Breast epithelium (tissue), 4 donors: ENCODE measurements at regions of chr2 and their contacts with region 1.

Region 1: GRCh38 chr2:31404827-31405226 is 9.7 kb downstream of the XDH start:
- DNase-seq: no peak
- H3K4me3 ChIP-seq: no peak overlapping the region
- H3K27ac ChIP-seq: no peak overlapping the region
- H3K4me1 ChIP-seq: no peaks in the 10 kb centered on the region
- H3K27me3 ChIP-seq: no peaks in the 10 kb centered on the region
- CTCF ChIP-seq: no peak
- POLR2A ChIP-seq: no peak

Region 2: DNA sequence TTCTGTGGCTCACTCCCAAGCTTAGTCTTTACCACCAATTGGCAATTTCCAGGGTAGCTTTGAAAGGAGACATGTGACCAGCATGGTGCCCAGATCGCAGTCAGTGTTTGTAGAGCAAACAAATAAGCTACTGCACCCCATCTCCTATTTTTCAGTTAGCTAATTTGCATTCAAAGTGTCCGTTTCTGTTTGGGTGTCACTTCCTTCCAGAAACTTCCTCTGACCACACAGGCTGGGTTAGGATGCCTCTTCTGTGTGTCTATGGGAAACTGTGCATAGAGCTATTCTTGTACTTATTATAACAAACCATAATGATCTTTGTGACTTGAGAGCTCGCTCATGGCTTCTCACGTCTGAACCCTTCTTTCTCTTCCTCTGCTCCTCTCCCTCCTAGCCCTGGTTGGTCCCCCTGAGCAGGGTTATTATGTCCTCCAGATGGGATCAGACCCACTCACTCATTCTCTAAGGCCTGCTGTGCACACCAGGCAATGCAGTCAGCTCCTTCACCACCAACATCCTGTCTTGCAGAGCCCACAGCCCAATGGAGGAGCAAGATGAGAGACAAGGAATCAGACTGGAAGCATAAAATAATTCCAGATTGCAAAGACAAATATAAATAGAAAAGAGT is 1382.3 kb before region 1 on chr2:
- intact Hi-C with region 1: loop called (anchors 5 kb)
- DNase-seq: no peak
- H3K4me3 ChIP-seq: no peak overlapping the region
- H3K27ac ChIP-seq: no peak overlapping the region
- H3K4me1 ChIP-seq: peaks cover 0 to 6% of the 10 kb centered on the region in 2 donors
- H3K27me3 ChIP-seq: peaks cover 0 to 8% of the 10 kb centered on the region in 2 donors
- CTCF ChIP-seq: no peak
- POLR2A ChIP-seq: no peak